Stomach (tissue), 19 donors: ENCODE measurements at regions of chr11 and their contacts with region 1.

Region 1: DNA sequence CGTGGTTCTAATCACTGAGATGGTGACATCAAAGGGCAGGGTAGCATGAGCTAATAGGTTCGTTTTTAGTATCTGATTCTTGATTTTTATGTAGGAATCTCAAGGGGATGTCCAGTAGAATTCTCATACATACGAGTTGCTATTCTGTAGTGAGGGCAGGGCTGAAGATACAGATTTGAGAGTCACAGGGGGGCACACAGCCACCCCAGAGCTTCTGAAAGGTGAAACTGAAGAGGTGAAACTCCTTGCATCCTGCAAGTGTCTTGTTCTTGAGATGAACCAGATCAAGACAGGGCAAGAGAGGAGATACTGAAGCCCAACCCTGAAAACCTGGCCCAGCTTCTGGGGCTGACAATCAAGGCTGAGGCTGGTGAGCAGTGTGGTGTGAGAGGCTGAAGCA is 35.6 kb upstream of the TMEM123 start:
- DNase-seq: no peak
- H3K4me3 ChIP-seq: no peak overlapping the region
- H3K27ac ChIP-seq: no peak overlapping the region
- H3K4me1 ChIP-seq: peaks cover 0 to 2% (median 0%) of the 10 kb centered on the region in 4 donors
- H3K27me3 ChIP-seq: no peaks in the 10 kb centered on the region
- CTCF ChIP-seq: no peak
- EP300 ChIP-seq: no peak
- POLR2A ChIP-seq: no peak

Region 2: GRCh38 chr11:102390667-102391465 is 97.3 kb before region 1 on chr11:
- intact Hi-C with region 1: loop called (anchors 5 kb)
- DNase-seq: peak; percentile 75 to 82
- H3K4me3 ChIP-seq: no peak overlapping the region
- H3K27ac ChIP-seq: no peak overlapping the region
- H3K4me1 ChIP-seq: peaks cover 0 to 7% (median 4%) of the 10 kb centered on the region in 4 donors
- H3K27me3 ChIP-seq: no peaks in the 10 kb centered on the region
- CTCF ChIP-seq: peak in 5 of 7 experiments; percentile 83 to 93 (median 86)
- EP300 ChIP-seq: no peak
- POLR2A ChIP-seq: no peak

Region 3: GRCh38 chr11:102794447-102794781 is 306.2 kb after region 1 on chr11:
- intact Hi-C with region 1: no loop called
- DNase-seq: no peak
- H3K4me3 ChIP-seq: no peak overlapping the region
- H3K27ac ChIP-seq: peak overlapping the region in 3 of 5 donors; percentile 5 to 68 (median 22)
- H3K4me1 ChIP-seq: peaks cover 9 to 32% (median 12%) of the 10 kb centered on the region in 4 donors
- H3K27me3 ChIP-seq: no peaks in the 10 kb centered on the region
- CTCF ChIP-seq: no peak
- EP300 ChIP-seq: no peak
- POLR2A ChIP-seq: no peak